Calu3 (cell line): ENCODE measurements at regions of chr17 and their contacts with region 1.

Region 1: GRCh38 chr17:45640141-45640850 is 143.8 kb upstream of the CRHR1 start:
- DNase-seq: peak; percentile 90
- H3K4me3 Mint-ChIP-seq: no peak overlapping the region
- H3K27ac Mint-ChIP-seq: peak overlapping the region; percentile 29
- H3K4me1 Mint-ChIP-seq: peaks cover 10% of the 10 kb centered on the region
- H3K27me3 Mint-ChIP-seq: no peaks in the 10 kb centered on the region
- CTCF ChIP-seq: peak; percentile 99

Region 2: DNA sequence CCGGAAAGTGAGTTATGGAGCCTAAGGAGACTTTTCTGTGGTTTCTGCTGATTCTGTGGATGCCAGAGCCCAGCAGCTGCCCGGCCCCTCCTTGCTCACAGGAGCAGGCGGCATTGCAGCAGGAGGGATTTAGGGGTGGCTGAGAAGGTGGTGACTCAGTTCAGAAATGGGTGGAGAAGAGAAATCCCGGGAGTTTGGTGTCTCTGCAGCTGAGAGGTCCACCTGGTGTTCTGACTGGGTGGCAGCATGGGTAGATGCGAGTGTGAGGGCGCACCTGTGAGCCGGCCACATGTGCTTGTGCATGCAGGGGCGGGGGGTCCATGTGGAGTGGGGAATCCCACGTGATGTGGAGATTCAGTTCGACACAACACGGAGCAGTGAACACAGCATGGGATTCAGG is 188.3 kb after region 1 on chr17:
- CTCF ChIA-PET with region 1: interaction called, 59 read pairs
- intact Hi-C with region 1: loop called (anchors 1 kb)
- DNase-seq: no peak
- H3K4me3 Mint-ChIP-seq: no peak overlapping the region
- H3K27ac Mint-ChIP-seq: no peak overlapping the region
- H3K4me1 Mint-ChIP-seq: no peaks in the 10 kb centered on the region
- H3K27me3 Mint-ChIP-seq: peaks cover 91% of the 10 kb centered on the region
- CTCF ChIP-seq: no peak

Region 3: GRCh38 chr17:45834471-45835396 is 194.4 kb after region 1 on chr17:
- CTCF ChIA-PET with region 1: interaction called, 59 read pairs
- intact Hi-C with region 1: loop called (anchors 1 kb)
- DNase-seq: no peak
- H3K4me3 Mint-ChIP-seq: no peak overlapping the region
- H3K27ac Mint-ChIP-seq: no peak overlapping the region
- H3K4me1 Mint-ChIP-seq: no peaks in the 10 kb centered on the region
- H3K27me3 Mint-ChIP-seq: peaks cover 89% of the 10 kb centered on the region
- CTCF ChIP-seq: no peak

Region 4: GRCh38 chr17:45852535-45853297 is 212.4 kb after region 1 on chr17:
- CTCF ChIA-PET with region 1: interaction called, 36 read pairs
- intact Hi-C with region 1: loop called (anchors 1 kb)
- DNase-seq: peak; percentile 80
- H3K4me3 Mint-ChIP-seq: no peak overlapping the region
- H3K27ac Mint-ChIP-seq: no peak overlapping the region
- H3K4me1 Mint-ChIP-seq: no peaks in the 10 kb centered on the region
- H3K27me3 Mint-ChIP-seq: peaks cover 91% of the 10 kb centered on the region
- CTCF ChIP-seq: peak; percentile 87